ENCODE measurements at regions of chr12 and their contacts with region 1.

Region 1: GRCh38 chr12:46585854-46586621 is 213.5 kb upstream of the SLC38A2 start:
- DNase-seq: peak; percentile 15 to 83 (median 51)
- ATAC-seq: peak; percentile 61
- H3K4me3 ChIP-seq: no peak overlapping the region
- H3K4me3 Mint-ChIP-seq: peak overlapping the region; percentile 71
- H3K27ac ChIP-seq: peak overlapping the region in 1 of 2 donors; percentile 13
- H3K27ac Mint-ChIP-seq: peak overlapping the region; percentile 87
- H3K4me1 ChIP-seq: peaks cover 14% of the 10 kb centered on the region
- H3K4me1 Mint-ChIP-seq: peaks cover 80% of the 10 kb centered on the region
- H3K27me3 ChIP-seq: no peaks in the 10 kb centered on the region
- H3K27me3 Mint-ChIP-seq: no peaks in the 10 kb centered on the region
- CTCF ChIP-seq: no peak

Region 2: DNA sequence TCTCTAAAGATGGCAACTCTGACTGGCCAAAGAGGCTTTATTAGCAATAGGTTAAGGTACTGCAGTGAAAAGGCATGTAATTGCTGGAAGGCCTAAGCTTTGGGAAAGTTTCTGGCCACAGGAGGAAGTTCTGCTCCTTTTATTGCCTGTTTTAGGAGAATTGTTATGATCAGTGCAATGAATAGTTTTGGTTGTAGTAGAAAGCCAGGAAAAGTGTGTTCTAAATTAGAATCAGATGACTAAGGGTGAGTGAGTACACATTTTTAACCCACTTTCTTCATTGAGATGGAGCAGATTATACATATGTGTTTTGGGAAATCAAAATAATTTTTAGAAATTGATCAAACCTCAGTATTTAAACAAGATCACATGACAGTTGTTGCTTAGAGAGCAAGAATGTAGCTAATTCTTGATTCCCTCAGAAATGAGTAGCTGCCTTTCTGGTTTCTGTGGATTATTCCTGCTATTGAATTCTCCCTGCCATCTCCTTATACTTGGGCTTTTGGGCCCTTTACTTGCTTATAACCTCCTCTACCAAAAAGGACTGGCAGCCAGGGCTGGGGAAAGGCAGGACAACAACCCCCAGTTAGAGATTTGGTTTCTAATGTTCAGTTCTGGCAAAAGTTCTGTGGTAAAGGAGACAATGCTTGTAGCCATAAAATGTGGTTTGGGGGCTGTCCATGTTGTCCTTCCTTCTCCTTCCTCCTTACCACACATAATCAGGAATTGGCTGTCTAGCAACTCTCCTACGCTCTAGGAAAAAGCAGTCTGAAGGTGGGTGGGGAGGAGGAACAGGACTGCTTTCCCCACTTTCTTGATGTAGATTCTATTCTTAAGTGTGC is 22.6 kb after region 1 on chr12:
- CTCF ChIA-PET with region 1: no interaction called
- POLR2A ChIA-PET with region 1: interaction called, 22 read pairs
- intact Hi-C with region 1: no loop called
- DNase-seq: no peak
- ATAC-seq: no peak
- H3K4me3 ChIP-seq: no peak overlapping the region
- H3K4me3 Mint-ChIP-seq: peak overlapping the region; percentile 38
- H3K27ac ChIP-seq: no peak overlapping the region
- H3K27ac Mint-ChIP-seq: peak overlapping the region; percentile 73
- H3K4me1 ChIP-seq: peaks cover 20% of the 10 kb centered on the region
- H3K4me1 Mint-ChIP-seq: peaks cover 53% of the 10 kb centered on the region
- H3K27me3 ChIP-seq: no peaks in the 10 kb centered on the region
- H3K27me3 Mint-ChIP-seq: no peaks in the 10 kb centered on the region
- CTCF ChIP-seq: no peak